Uterus (tissue), 4 donors: ENCODE measurements at regions of chr5 and their contacts with region 1.

Region 1: DNA sequence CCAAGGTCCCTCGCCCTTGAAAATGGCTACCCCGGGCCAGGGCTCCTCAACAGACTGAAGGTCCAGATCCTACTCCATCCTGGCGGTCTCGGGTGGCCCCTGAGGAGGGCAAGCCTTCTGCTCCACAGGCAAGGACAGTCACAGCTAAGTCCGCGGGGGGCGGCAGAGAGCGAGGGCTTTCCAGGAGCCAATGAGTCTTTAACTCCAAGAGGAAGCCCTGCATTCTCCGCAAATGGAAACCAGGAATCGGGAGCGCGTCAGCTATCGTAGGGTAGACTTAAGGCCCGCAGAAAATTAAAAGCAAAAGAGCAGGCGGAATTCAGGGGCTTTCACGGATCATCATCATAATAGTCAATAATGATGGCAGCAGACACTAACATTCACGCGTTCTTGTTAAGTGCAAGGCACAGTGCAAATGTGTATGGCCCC is 87.8 kb upstream of the TNFAIP8 start:
- DNase-seq: peak; percentile 89 to 94
- H3K4me3 ChIP-seq: peak overlapping the region; percentile 71 to 81
- H3K27ac ChIP-seq: peak overlapping the region; percentile 90
- H3K4me1 ChIP-seq: no peaks in the 10 kb centered on the region
- H3K27me3 ChIP-seq: no peaks in the 10 kb centered on the region
- CTCF ChIP-seq: peak; percentile 4 to 70 (median 34)
- POLR2A ChIP-seq: no peak

Region 2: DNA sequence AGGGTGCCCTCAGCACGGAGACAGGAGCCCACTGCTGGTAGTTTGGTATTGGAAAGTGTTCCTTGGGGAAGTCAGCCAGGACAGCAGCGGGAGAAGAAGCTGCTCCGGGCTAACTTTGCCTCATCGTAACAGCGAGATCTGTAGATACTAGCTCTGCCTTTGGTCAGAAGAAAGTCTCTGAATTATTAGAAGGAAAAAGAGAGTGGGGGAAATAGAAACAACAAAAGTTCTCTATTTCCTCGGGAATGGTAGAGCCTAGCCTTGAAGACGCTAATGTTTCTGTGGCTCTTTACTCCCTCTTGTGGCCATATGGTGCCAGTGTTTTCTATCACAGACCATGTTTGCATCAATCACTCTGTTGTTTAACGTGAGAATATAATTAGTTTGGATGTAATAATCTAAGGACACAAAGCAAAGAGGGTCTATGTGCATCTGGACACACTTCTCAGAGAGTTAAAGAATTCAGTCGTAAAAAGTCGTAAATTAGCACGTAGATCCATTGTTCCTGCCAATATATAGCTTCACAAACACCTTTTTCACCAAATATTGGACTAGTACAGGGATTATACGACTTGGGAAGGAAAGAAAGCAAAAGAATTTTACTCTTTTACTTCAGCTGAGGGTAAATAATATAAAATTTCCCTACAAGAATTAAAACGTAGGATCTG is 144.1 kb after region 1 on chr5:
- intact Hi-C with region 1: loop called (anchors 10 kb)
- DNase-seq: peak; percentile 38 to 68
- H3K4me3 ChIP-seq: peak overlapping the region; percentile 34 to 41
- H3K27ac ChIP-seq: peak overlapping the region; percentile 81 to 84
- H3K4me1 ChIP-seq: no peaks in the 10 kb centered on the region
- H3K27me3 ChIP-seq: no peaks in the 10 kb centered on the region
- CTCF ChIP-seq: peak; percentile 87 to 92 (median 90)
- POLR2A ChIP-seq: no peak